Stomach (tissue), 19 donors: ENCODE measurements at regions of chr9 and their contacts with region 1.

Region 1: DNA sequence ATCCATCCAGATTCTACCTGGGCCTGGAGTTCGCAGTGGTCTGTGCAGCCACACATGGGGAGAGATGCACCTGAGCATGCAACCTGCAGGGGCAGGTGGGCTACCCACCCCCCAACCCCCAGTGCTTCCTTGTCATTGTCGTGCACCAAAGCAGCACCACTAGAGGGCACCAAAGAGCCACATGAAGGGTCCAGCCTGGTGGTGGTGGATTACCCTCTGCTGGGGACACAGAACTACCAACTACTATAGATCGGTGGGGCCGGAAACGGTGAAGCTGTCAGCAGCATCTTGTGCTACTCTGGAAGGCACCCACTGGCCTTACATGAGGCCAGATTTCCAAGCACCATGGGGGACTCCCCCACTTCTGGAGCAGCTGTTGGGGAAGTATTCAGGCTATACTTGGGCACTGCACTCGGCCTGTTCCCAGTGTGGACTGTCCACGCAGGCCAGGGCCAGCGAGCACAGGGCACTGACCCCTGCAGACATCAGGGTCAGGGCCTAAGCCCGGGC is 60.2 kb upstream of the TBC1D2 start:
- DNase-seq: peak; percentile 81 to 93
- H3K4me3 ChIP-seq: no peak overlapping the region
- H3K27ac ChIP-seq: no peak overlapping the region
- H3K4me1 ChIP-seq: peaks cover 0 to 5% (median 0%) of the 10 kb centered on the region in 4 donors
- H3K27me3 ChIP-seq: no peaks in the 10 kb centered on the region
- CTCF ChIP-seq: peak in 5 of 7 experiments; percentile 77 to 85 (median 80)
- EP300 ChIP-seq: no peak
- POLR2A ChIP-seq: no peak

Region 2: GRCh38 chr9:98380065-98380681 is 64.6 kb after region 1 on chr9:
- intact Hi-C with region 1: no loop called
- DNase-seq: peak in 1 of 2 donors; percentile 77
- H3K4me3 ChIP-seq: no peak overlapping the region
- H3K27ac ChIP-seq: no peak overlapping the region
- H3K4me1 ChIP-seq: peaks cover 0 to 7% (median under 1%) of the 10 kb centered on the region in 4 donors
- H3K27me3 ChIP-seq: no peaks in the 10 kb centered on the region
- CTCF ChIP-seq: no peak
- EP300 ChIP-seq: no peak
- POLR2A ChIP-seq: no peak

Region 3: DNA sequence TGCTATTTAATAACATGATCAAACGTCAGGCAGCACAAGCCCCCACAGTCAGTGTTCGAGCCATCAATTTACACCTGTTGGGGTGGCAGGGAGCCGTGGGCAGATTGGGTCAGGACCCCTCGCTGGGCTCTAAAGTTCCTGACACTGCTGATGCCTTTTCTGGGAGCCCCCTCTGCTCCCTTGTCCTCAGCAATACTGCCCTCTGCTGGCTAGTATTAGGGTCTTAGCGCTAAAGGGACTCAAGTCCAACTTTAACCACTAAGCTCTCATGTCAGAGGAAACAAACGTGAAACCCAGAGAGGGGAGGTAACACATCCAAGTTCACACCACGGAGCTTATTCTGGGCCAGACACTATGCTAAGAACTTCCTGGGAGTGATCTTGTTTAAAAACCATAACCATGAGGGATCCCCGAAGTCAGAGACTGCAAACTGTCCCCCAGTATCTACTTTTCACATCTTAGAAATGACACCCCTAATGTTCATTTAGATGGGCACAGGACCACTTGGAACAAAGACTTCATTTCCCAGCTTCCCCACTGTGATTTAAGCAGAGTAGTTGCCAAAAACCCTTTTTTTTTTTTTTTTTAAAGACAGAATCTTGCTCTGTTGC is 460.3 kb after region 1 on chr9:
- intact Hi-C with region 1: loop called (anchors 10 kb)
- DNase-seq: peak in 1 of 2 donors; percentile 82
- H3K4me3 ChIP-seq: no peak overlapping the region
- H3K27ac ChIP-seq: no peak overlapping the region
- H3K4me1 ChIP-seq: peaks cover 0 to 5% (median 0%) of the 10 kb centered on the region in 4 donors
- H3K27me3 ChIP-seq: no peaks in the 10 kb centered on the region
- CTCF ChIP-seq: peak in 4 of 7 experiments; percentile 32 to 52 (median 44)
- EP300 ChIP-seq: no peak
- POLR2A ChIP-seq: no peak